Endothelial cell of umbilical vein (primary cell): ENCODE measurements at regions of chr1 and their contacts with region 1.

Region 1: DNA sequence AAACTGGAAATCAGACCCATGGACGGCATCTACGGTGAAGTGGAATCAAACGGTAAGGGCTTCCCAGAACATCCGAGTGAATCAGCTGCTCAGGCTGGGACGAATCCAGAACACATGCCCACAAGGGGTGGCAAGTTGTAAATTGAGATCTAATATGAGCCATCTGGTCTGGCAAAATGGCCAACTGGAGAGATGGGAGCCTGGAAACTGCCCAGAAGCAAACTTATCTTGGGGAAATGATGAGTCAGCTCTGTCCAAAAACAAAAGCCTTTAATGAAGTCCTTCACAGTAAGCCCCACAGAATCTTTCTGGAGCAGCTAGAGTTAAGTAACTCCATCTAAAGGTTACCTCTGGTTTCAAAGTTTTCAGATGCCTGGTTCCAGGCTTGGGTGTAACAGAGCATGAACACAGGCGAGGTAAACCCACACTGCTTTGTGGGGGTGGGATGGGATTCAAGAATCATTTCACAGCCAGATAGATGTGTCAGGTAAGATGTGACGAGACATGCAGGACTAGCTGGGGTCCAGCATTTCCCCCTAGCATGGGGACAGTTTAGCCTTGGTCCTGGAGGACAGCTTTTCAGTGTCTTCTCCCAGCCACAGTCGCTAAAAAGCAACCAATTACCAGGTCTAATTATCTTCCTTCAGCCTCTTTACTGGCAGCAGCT is 10.5 kb upstream of the SRP9 start:
- DNase-seq: peak; percentile 84
- H3K4me3 ChIP-seq: no peak overlapping the region
- H3K27ac ChIP-seq: peak overlapping the region; percentile 58
- H3K4me1 ChIP-seq: peaks cover 47% of the 10 kb centered on the region
- H3K27me3 ChIP-seq: no peaks in the 10 kb centered on the region
- CTCF ChIP-seq: no peak
- POLR2A ChIP-seq: no peak

Region 2: GRCh38 chr1:225508538-225509375 is 258.3 kb before region 1 on chr1:
- CTCF ChIA-PET with region 1: interaction called, 19 read pairs
- POLR2A ChIA-PET with region 1: no interaction called
- dilution Hi-C with region 1: no loop called
- intact Hi-C with region 1: loop called (anchors 5 kb)
- DNase-seq: peak; percentile 97
- H3K4me3 ChIP-seq: no peak overlapping the region
- H3K27ac ChIP-seq: peak overlapping the region; percentile 72
- H3K4me1 ChIP-seq: peaks cover 23% of the 10 kb centered on the region
- H3K27me3 ChIP-seq: no peaks in the 10 kb centered on the region
- CTCF ChIP-seq: no peak
- POLR2A ChIP-seq: no peak

Region 3: DNA sequence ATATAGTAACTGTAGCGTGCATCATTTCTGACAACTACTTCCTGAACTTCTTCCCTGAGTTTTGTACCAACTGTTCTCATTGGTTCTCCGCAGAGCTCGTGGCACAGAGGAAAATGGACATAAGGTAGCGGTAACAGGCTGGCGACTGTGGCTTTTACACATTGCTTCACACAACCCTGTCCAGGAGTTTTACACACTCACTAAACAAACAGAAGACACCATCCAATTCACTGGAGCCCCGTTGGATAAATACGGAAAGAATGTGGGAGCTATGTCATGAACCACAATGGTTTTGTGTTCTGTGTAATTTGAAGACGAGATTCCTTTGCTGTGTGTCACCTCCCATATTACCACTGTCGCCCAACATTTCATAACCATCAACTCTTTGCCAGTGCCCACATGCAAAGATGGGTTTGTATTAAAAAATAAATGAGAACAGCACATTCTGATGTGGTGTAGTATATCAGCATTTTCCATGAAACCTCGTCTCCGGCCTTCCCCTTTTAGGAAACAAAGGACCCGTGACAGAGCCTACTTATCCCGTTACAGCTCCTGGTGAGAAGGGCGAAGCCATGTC is 66.8 kb before region 1 on chr1:
- CTCF ChIA-PET with region 1: interaction called, 11 read pairs
- POLR2A ChIA-PET with region 1: no interaction called
- dilution Hi-C with region 1: no loop called
- intact Hi-C with region 1: loop called (anchors 2 kb)
- DNase-seq: peak; percentile 67
- H3K4me3 ChIP-seq: no peak overlapping the region
- H3K27ac ChIP-seq: peak overlapping the region; percentile 58
- H3K4me1 ChIP-seq: peaks cover 20% of the 10 kb centered on the region
- H3K27me3 ChIP-seq: no peaks in the 10 kb centered on the region
- CTCF ChIP-seq: no peak
- POLR2A ChIP-seq: no peak

Region 4: DNA sequence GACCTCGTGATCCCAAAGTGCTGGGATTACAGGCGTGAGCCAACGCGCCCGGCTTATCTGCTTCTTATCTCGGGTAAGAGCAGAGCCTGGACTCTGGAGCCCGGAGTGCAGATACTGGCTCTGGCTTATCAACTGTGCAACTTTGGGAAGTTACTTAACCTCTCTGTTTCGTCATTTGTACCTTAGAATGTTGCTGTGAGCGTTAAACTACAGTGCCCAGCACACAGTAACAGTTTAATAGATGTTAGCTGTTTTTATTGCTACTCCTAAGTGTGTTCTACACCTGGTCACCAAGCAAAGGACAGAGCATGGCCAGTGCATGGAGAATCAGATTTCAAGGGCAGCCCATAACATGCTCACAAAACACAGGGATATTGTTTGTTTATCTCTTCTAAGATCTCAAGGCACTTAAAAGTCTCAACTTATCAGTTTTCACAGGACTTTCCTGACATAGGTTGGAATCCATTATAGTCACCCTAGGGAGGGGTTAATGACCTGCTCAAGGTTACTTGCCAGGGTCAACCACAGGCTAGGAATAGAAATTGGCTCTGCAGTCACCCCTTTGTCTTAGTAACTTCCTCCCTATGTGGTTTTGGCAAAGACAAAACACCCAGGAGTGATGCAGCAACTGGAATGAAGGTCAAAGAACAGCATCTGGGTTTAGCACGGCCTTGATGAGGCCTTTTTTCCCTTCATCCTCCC is 12.0 kb before region 1 on chr1:
- CTCF ChIA-PET with region 1: interaction called, 41 read pairs
- POLR2A ChIA-PET with region 1: interaction called, 3 read pairs
- dilution Hi-C with region 1: no loop called
- intact Hi-C with region 1: loop called (anchors 1 kb)
- DNase-seq: peak; percentile 56
- H3K4me3 ChIP-seq: no peak overlapping the region
- H3K27ac ChIP-seq: peak overlapping the region; percentile 25
- H3K4me1 ChIP-seq: peaks cover 13% of the 10 kb centered on the region
- H3K27me3 ChIP-seq: no peaks in the 10 kb centered on the region
- CTCF ChIP-seq: no peak
- POLR2A ChIP-seq: no peak

Region 5: GRCh38 chr1:225855503-225856300 is 88.6 kb after region 1 on chr1:
- CTCF ChIA-PET with region 1: no interaction called
- POLR2A ChIA-PET with region 1: no interaction called
- dilution Hi-C with region 1: no loop called
- intact Hi-C with region 1: no loop called
- DNase-seq: no peak
- H3K4me3 ChIP-seq: no peak overlapping the region
- H3K27ac ChIP-seq: no peak overlapping the region
- H3K4me1 ChIP-seq: no peaks in the 10 kb centered on the region
- H3K27me3 ChIP-seq: no peaks in the 10 kb centered on the region
- CTCF ChIP-seq: no peak
- POLR2A ChIP-seq: no peak

Region 6: GRCh38 chr1:225866061-225866837 is 99.1 kb after region 1 on chr1:
- CTCF ChIA-PET with region 1: no interaction called
- POLR2A ChIA-PET with region 1: no interaction called
- dilution Hi-C with region 1: no loop called
- intact Hi-C with region 1: no loop called
- DNase-seq: peak; percentile 57
- H3K4me3 ChIP-seq: no peak overlapping the region
- H3K27ac ChIP-seq: no peak overlapping the region
- H3K4me1 ChIP-seq: peaks cover 12% of the 10 kb centered on the region
- H3K27me3 ChIP-seq: no peaks in the 10 kb centered on the region
- CTCF ChIP-seq: no peak
- POLR2A ChIP-seq: no peak